ENCODE measurements at regions of chr15 and their contacts with region 1.

Region 1: GRCh38 chr15:90334304-90334731 is 17.8 kb upstream of the ZNF774 start:
- DNase-seq: peak; percentile 80 to 82
- H3K4me3 ChIP-seq: no peak overlapping the region
- H3K4me3 Mint-ChIP-seq: peak overlapping the region; percentile 59
- H3K27ac Mint-ChIP-seq: peak overlapping the region; percentile 83
- H3K4me1 ChIP-seq: peaks cover 48% of the 10 kb centered on the region
- H3K4me1 Mint-ChIP-seq: peaks cover 24% of the 10 kb centered on the region
- H3K27me3 ChIP-seq: no peaks in the 10 kb centered on the region
- H3K27me3 Mint-ChIP-seq: no peaks in the 10 kb centered on the region
- CTCF ChIP-seq: no peak

Region 2: GRCh38 chr15:90352109-90352893 is 18.0 kb after region 1 on chr15 and contains the start of gene ZNF774:
- CTCF ChIA-PET with region 1: no interaction called
- POLR2A ChIA-PET with region 1: interaction called, 3 read pairs
- intact Hi-C with region 1: loop called (anchors 1 kb)
- DNase-seq: peak; percentile 95 to 97
- H3K4me3 ChIP-seq: peak within 1 kb of the TSS; percentile 64
- H3K4me3 Mint-ChIP-seq: peak within 1 kb of the TSS; percentile 91
- H3K27ac Mint-ChIP-seq: peak within 1 kb of the TSS; percentile 85
- H3K4me1 ChIP-seq: peaks cover 4% of the 10 kb centered on the region; the same call in 1 of the 2 replicates
- H3K4me1 Mint-ChIP-seq: no peaks in the 10 kb centered on the region
- H3K27me3 ChIP-seq: no peaks in the 10 kb centered on the region
- H3K27me3 Mint-ChIP-seq: no peaks in the 10 kb centered on the region
- CTCF ChIP-seq: no peak
- total RNA-seq, gene ZNF774: 9.4 and 11.9 TPM in 2 replicates